Posterior cingulate gyrus (tissue), 11 donors: ENCODE measurements at regions of chr16 and their contacts with region 1.

Region 1: DNA sequence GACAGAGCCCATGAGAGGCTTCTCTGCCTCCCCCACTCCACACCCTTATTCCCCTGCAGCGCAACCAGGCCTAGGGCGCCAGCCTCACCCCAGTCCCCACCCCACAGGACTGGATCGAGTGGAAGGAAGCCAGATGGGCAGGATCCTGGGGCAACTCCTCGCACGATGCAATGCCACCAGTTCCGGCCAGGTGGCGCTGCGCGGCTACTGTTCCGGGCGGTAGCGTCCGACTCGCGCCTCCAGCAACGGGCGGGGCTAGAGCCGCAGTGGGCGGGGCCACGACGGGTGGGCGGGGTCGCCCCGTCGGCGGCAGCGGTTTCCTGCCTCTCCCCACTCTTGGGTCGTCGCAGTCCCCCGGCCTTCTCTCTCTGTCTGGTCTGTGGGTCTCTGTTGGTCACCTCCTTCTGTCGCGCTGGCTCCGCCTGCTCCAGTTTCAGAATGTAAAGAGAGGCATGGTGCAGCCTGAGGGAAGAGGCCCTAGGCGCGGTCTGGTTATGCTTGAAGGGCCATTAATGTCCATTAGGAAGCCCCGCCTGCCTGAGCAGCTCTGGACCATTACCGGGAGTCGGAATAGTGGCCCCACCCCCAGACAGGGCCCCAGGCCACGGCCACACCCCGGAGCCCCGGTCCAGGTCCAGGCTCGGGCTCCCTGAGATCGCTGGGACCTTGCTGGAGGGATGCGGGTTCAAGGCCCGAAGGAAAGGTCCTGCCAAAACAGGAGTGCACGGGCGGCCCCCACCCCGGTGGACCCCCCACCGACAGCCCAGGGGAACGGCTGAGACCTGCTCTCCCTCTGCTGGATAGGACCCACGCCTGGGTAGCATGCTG is 3.4 kb upstream of the NHERF2 start:
- DNase-seq: peak; percentile 81 to 99 (median 96)

Region 2: DNA sequence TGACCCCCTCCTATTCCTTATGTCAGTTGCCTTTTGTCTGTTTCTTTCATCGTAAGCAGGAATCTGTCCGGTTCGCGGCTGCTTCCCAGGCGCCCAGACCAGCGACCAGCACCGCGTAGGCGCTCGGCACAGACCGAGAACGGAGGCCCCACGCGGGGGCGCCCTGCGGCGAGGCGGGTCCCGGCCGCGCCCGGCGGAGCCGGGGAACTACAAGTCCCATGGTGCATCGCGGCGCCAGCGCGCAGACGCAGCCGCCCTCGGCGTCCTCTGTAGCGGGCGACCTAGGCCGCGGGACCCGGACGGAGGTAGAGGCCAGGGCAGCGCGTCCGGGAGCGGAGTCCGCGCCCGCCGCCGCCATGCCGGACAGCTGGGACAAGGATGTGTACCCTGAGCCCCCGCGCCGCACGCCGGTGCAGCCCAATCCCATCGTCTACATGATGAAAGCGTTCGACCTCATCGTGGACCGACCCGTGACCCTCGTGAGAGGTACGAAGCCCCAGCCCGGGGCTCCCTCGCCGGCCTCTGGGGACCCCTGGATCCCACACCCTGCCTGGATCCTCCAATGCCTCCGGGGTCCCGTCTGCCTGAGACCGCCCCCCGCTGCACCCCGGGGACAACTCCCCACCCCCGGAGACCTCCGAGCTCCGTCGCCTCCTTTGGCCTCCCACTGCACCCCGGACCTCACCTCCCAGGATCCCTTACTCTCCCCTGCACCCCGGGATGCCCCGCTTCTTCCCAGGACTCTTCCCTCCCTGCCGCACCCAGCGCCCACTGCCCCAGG is 63.9 kb before region 1 on chr16 and contains the start of gene NDUFB10:
- intact Hi-C with region 1: no loop called
- DNase-seq: peak; percentile 88 to 99 (median 92)

Region 3: GRCh38 chr16:1983544-1984346 is 39.6 kb before region 1 on chr16 and contains the start of gene GFER:
- intact Hi-C with region 1: no loop called
- DNase-seq: peak; percentile 74 to 98 (median 84)

Region 4: DNA sequence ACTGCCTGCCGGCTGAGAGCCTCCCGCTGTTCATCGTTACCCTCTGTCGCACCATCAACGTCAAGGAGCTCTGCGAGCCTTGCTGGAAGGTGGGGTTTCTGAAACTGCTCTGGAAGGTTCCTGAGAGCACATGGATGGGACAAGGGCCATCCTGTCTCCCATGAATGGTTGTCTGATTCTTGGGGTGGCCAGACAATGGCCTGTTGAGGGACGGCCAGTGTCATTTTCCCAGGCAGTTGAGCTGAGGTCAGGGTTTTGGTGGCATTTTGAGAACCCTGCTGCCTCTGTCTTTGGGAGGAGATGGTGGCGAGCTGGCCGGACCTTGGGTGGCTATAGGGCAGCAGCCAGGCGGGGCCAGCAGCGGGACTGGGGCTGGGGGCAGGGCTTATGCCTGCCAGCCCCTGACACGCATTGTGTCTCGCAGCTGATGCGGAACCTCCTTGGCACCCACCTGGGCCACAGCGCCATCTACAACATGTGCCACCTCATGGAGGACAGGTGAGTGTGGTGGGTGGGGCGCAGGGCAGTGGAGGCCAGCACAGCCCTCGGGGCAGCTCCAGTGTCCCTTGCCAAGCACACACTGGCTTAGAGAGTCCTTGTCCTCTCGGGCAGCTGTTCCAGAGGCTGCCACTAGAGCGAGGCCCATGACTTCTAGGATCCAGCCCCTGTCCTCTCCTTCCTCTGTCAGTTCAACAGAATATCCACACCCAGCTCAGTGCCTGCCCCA is 33.5 kb after region 1 on chr16:
- intact Hi-C with region 1: loop called (anchors 1 kb)
- DNase-seq: peak in 3 of 10 donors; percentile 14 to 62 (median 42)

Region 5: GRCh38 chr16:2142942-2143877 is 119.9 kb after region 1 on chr16:
- intact Hi-C with region 1: loop called (anchors 1 kb)
- DNase-seq: peak in 8 of 10 donors; percentile 60 to 96 (median 78)

Region 6: GRCh38 chr16:2296661-2297505 is 273.6 kb after region 1 on chr16:
- intact Hi-C with region 1: no loop called
- DNase-seq: peak in 1 of 10 donors; percentile 35